ENCODE measurements at regions of chr6 and their contacts with region 1.

Region 1: GRCh38 chr6:28542440-28543296 is 17.0 kb downstream of the GPX5 start:
- DNase-seq: peak; percentile 95
- ATAC-seq: peak; percentile 88
- H3K4me3 Mint-ChIP-seq: peak overlapping the region; percentile 90
- H3K27ac Mint-ChIP-seq: peak overlapping the region; percentile 99
- H3K4me1 Mint-ChIP-seq: peaks cover 23% of the 10 kb centered on the region
- H3K27me3 Mint-ChIP-seq: peaks cover 10% of the 10 kb centered on the region
- CTCF ChIP-seq: peak; percentile 40; the same call in 1 of the 2 replicates

Region 2: DNA sequence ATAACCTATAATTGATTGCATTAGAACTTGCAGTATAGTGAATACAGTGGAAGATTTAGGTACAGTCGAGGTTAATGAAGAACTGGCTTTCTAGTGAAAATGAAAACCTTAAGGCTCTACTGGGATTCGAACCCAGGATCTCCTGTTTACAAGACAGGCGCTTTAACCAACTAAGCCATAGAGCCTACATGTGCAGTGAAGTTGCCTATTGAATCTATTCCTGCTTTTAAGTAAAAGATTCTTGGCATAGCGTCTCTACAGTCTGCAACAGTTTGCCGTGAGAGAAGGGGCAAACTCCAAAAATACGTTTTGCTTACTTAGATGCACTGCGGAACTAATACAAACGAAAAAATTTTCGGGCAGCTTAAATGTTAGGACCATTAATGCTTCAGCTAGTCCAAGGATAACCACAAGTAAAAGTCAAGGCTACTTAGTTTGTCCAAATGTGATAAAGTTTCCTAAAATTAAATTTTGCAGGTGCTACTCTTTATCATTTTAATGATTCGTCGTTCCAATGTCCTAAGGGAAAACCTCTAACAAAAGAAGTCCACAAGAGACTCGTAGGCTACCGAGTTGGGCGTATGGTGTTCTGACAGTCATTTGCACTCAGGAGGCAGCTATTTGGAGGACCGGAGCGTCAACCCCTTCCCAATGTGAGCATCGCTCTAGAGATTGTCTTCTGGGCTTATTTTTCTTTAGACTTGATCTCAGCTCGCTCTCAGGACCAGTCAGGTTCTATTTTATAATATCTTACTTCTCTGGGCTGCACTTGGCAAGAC is 68.0 kb before region 1 on chr6:
- CTCF ChIA-PET with region 1: interaction called, 10 read pairs
- POLR2A ChIA-PET with region 1: no interaction called
- DNase-seq: no peak
- ATAC-seq: peak; percentile 93
- H3K4me3 Mint-ChIP-seq: peak overlapping the region; percentile 94
- H3K27ac Mint-ChIP-seq: no peak overlapping the region
- H3K4me1 Mint-ChIP-seq: peaks cover 9% of the 10 kb centered on the region
- H3K27me3 Mint-ChIP-seq: peaks cover 21% of the 10 kb centered on the region
- CTCF ChIP-seq: no peak

Region 3: GRCh38 chr6:28506807-28507475 is 35.7 kb before region 1 on chr6:
- CTCF ChIA-PET with region 1: interaction called, 12 read pairs
- POLR2A ChIA-PET with region 1: interaction called, 3 read pairs
- DNase-seq: no peak
- ATAC-seq: peak; percentile 69
- H3K4me3 Mint-ChIP-seq: no peak overlapping the region; the same call in 1 of the 2 replicates
- H3K27ac Mint-ChIP-seq: peak overlapping the region; percentile 82
- H3K4me1 Mint-ChIP-seq: peaks cover 24% of the 10 kb centered on the region
- H3K27me3 Mint-ChIP-seq: no peaks in the 10 kb centered on the region
- CTCF ChIP-seq: no peak

Region 4: DNA sequence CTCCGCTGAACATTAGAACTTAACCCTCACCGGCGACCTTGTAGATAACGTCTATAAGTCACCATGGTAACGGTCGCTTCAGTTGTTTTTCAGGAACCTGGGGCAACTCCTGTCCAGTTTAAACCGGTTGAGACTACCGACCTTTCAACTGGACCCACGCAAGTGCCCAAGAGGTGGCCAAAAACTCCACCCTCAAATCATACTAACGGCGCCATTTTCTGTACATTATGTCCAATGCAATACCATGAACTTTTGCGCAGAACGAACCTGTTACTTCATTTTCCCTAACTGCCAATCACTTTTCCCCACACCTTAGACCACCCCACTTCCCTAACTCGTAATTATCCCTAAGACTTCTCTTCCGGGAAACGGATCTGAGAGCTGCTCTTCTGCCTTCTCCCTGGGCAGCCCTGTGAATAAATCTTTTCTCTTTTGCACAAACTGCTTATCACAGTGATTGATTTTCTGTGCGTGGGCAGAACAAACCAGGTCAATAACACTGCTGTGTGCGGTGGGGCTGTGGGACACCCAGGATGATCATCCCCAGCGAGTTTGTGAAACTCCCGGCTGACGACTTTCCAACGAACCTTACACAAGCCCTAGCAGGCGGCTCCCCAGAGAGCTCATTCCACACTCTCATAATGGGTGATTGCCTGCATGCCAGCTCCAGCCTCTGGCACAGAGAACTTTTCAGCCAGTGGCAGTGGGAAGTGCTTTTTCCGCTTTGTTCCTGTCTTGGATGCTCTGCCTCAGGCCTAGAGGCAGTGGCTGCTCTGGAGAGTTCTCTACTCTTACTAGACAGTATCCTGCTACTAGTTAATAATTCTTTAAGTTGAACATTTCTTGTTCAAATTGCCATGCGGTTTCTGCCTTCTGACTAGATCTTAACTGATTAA is 11.6 kb after region 1 on chr6:
- CTCF ChIA-PET with region 1: interaction called, 24 read pairs
- POLR2A ChIA-PET with region 1: no interaction called
- DNase-seq: no peak
- ATAC-seq: no peak; the same call in 1 of the 2 replicates
- H3K4me3 Mint-ChIP-seq: peak overlapping the region; percentile 76
- H3K27ac Mint-ChIP-seq: no peak overlapping the region
- H3K4me1 Mint-ChIP-seq: peaks cover 16% of the 10 kb centered on the region
- H3K27me3 Mint-ChIP-seq: peaks cover 69% of the 10 kb centered on the region
- CTCF ChIP-seq: no peak

Region 5: GRCh38 chr6:28615955-28616747 is 73.5 kb after region 1 on chr6:
- CTCF ChIA-PET with region 1: interaction called, 14 read pairs
- POLR2A ChIA-PET with region 1: no interaction called
- DNase-seq: peak; percentile 71
- ATAC-seq: peak; percentile 97
- H3K4me3 Mint-ChIP-seq: peak overlapping the region; percentile 69
- H3K27ac Mint-ChIP-seq: no peak overlapping the region
- H3K4me1 Mint-ChIP-seq: peaks cover 20% of the 10 kb centered on the region
- H3K27me3 Mint-ChIP-seq: peaks cover 37% of the 10 kb centered on the region
- CTCF ChIP-seq: no peak

Region 6: GRCh38 chr6:28758046-28758817 is 215.6 kb after region 1 on chr6:
- CTCF ChIA-PET with region 1: no interaction called
- POLR2A ChIA-PET with region 1: no interaction called
- DNase-seq: peak; percentile 83
- ATAC-seq: peak; percentile 84
- H3K4me3 Mint-ChIP-seq: peak overlapping the region; percentile 83
- H3K27ac Mint-ChIP-seq: peak overlapping the region; percentile 91
- H3K4me1 Mint-ChIP-seq: peaks cover 10% of the 10 kb centered on the region; the same call in 1 of the 2 replicates
- H3K27me3 Mint-ChIP-seq: peaks cover 43% of the 10 kb centered on the region
- CTCF ChIP-seq: no peak

Measured in WTC11 (cell line).